PC-9 (cell line): ENCODE measurements at regions of chr1 and their contacts with region 1.

Region 1: DNA sequence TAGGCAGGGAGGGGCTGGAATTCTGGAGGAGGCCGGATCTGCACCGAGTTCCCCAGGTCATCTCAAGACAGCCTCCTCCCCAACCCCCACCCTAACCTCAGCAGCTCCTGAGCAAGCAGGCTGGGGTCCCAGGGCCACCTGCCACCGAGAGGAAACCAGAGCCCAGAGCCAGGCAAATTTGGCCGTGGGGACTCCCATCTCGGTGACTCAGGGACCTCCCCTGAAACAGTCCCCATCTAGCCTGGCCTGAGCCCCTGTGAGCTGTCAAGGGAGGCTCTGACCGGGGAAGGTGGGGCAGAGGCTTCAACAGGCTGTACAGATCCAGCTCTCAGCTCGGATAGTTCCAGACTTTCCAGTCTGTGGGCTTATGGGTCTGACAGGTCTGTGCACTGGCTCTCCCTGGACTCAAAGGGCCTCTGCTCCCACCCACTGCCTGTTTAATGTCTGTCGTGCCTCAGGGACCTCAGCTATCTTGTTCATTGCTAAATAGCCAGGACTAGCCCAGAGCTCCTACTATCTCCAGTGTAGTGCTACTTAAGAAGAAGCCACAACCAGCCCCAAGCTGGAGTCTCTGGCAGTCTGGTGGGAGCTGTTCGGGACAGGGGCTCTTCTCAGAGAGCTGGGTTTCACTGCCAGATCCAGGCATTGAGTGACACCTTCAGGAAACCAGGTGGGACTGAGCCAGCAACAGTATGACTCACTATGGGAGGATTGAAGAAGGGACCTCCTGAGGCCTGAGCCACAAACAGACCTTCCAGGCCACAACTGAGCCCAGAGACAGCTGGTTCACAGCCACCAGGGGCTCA is 25.6 kb downstream of the MATN1 start:
- DNase-seq: no peak
- H3K4me3 ChIP-seq: no peak overlapping the region
- H3K27ac ChIP-seq: no peak overlapping the region
- H3K4me1 ChIP-seq: no peaks in the 10 kb centered on the region
- H3K27me3 ChIP-seq: no peaks in the 10 kb centered on the region
- CTCF ChIP-seq: no peak

Region 2: DNA sequence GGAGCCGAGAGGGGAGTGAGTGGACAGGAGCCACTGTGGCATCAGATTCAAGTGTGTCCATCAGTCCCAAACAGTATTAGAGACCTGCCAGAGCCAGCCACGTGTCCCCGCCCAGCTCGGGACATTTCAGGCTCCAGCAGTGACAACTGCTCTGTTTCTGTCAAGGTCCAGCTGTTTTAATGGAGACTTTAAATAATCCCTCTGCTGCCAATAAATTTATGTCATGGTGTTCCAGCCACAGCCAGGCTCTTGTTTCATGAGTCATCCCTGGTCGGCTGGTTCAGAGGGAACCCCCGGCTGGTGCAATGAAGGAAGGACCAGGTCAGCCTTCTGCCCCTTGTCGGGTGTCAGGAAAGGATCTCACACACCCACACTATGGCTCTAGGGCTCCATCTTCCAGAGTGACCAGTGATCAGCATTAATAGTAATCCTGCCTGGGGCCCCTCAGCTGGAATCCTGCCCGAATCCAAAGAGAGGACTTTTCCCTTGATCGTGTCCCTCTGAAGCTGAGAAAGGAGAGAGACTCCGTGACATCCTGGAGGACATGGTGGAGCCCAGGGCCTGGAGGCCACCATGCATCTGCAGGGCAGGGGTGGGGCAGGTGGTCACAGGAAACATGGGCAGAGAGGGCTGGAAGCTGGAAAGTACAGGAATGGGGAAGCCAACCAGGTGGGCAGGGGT is 171.7 kb before region 1 on chr1:
- CTCF ChIA-PET with region 1: no interaction called
- POLR2A ChIA-PET with region 1: no interaction called
- intact Hi-C with region 1: loop called (anchors 10 kb)
- DNase-seq: peak; percentile 65 to 72
- H3K4me3 ChIP-seq: no peak overlapping the region
- H3K27ac ChIP-seq: no peak overlapping the region; the same call in 1 of the 2 replicates
- H3K4me1 ChIP-seq: peaks cover 23% of the 10 kb centered on the region
- H3K27me3 ChIP-seq: no peaks in the 10 kb centered on the region
- CTCF ChIP-seq: no peak; the same call in 1 of the 2 replicates

Region 3: GRCh38 chr1:31182352-31182751 is 484.6 kb after region 1 on chr1:
- CTCF ChIA-PET with region 1: no interaction called
- POLR2A ChIA-PET with region 1: no interaction called
- intact Hi-C with region 1: no loop called
- DNase-seq: peak; percentile 73 to 77
- H3K4me3 ChIP-seq: no peak overlapping the region; the same call in 1 of the 2 replicates
- H3K27ac ChIP-seq: no peak overlapping the region
- H3K4me1 ChIP-seq: no peaks in the 10 kb centered on the region
- H3K27me3 ChIP-seq: no peaks in the 10 kb centered on the region
- CTCF ChIP-seq: peak; percentile 52